ENCODE measurements at regions of chr5 and their contacts with region 1.

Region 1: DNA sequence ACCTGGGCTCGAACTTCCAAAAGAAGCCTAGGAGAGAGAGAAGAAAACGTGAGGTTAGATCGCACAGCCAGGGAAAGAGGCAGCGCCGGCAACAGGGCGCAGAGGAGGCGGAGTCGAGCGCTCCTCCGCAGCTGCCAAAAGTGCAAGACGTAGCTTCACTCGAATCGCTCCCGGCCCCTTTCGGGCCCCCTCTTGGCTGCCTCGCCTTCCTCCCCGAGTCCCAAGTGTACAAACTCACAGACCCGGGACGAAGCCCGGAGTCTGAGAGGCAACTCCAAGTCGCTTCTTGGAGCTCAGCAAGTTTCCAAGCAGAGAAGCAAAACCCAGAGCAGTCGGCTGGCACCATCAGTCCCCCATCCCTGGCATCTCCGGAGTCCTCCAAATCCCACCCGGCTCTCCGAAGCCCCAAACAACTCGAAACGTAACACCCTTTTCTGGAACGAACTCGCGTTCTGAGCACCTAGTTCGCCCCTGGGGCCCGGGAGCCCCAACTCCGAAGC is 1.2 kb downstream of the MIER3 start:
- DNase-seq: peak; percentile 63
- ATAC-seq: peak; percentile 53
- H3K4me3 Mint-ChIP-seq: peak overlapping the region; percentile 89
- H3K27ac Mint-ChIP-seq: peak overlapping the region; percentile 74
- H3K4me1 Mint-ChIP-seq: peaks cover 14% of the 10 kb centered on the region
- H3K27me3 Mint-ChIP-seq: peaks cover 28% of the 10 kb centered on the region

Region 2: DNA sequence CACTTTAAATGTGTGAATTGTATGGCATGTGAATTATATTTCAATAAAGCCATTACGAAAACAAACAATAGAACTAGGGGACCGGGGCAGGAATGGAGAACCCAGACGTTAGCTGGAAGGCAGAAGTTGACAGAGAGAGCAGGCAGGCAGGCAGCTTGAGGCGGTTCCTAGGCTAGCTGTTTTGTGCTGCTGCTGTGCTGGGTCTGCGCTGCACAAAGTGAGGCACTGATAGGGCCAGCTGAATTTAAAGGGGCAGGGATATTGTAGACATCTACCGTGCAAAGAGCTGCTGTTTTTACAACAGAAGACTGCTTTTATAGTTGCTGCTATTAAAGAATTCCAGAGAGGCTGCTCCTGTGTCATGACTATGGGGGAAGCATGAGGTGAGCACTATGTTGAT is 22.8 kb after region 1 on chr5:
- POLR2A ChIA-PET with region 1: no interaction called
- DNase-seq: no peak
- ATAC-seq: no peak
- H3K4me3 Mint-ChIP-seq: no peak overlapping the region
- H3K27ac Mint-ChIP-seq: no peak overlapping the region
- H3K4me1 Mint-ChIP-seq: no peaks in the 10 kb centered on the region
- H3K27me3 Mint-ChIP-seq: peaks cover 9% of the 10 kb centered on the region

Region 3: GRCh38 chr5:57007344-57007743 is 56.7 kb after region 1 on chr5:
- POLR2A ChIA-PET with region 1: no interaction called
- DNase-seq: no peak
- ATAC-seq: no peak
- H3K4me3 Mint-ChIP-seq: no peak overlapping the region
- H3K27ac Mint-ChIP-seq: no peak overlapping the region
- H3K4me1 Mint-ChIP-seq: no peaks in the 10 kb centered on the region
- H3K27me3 Mint-ChIP-seq: peaks cover 7% of the 10 kb centered on the region

Region 4: GRCh38 chr5:57173185-57174127 is 222.8 kb after region 1 on chr5 and contains the start of gene GPBP1:
- POLR2A ChIA-PET with region 1: interaction called, 12 read pairs
- DNase-seq: peak; percentile 96
- ATAC-seq: peak; percentile 78
- H3K4me3 Mint-ChIP-seq: peak within 1 kb of the TSS; percentile 98
- H3K27ac Mint-ChIP-seq: peak within 1 kb of the TSS; percentile 99
- H3K4me1 Mint-ChIP-seq: peaks cover 22% of the 10 kb centered on the region
- H3K27me3 Mint-ChIP-seq: no peaks in the 10 kb centered on the region
- total RNA-seq, gene GPBP1: 107 to 112 TPM